ENCODE measurements at regions of chr11 and their contacts with region 1.

Region 1: GRCh38 chr11:63845303-63845702 is 6.4 kb downstream of the MARK2 start:
- DNase-seq: no peak
- H3K4me3 ChIP-seq: no peak overlapping the region
- H3K27ac ChIP-seq: peak overlapping the region in 2 of 4 donors; percentile 22 to 27
- H3K4me1 ChIP-seq: peaks cover 30 to 79% (median 47%) of the 10 kb centered on the region in 4 donors
- H3K27me3 ChIP-seq: no peaks in the 10 kb centered on the region
- CTCF ChIP-seq: no peak
- EP300 ChIP-seq: no peak
- POLR2A ChIP-seq: no peak

Region 2: DNA sequence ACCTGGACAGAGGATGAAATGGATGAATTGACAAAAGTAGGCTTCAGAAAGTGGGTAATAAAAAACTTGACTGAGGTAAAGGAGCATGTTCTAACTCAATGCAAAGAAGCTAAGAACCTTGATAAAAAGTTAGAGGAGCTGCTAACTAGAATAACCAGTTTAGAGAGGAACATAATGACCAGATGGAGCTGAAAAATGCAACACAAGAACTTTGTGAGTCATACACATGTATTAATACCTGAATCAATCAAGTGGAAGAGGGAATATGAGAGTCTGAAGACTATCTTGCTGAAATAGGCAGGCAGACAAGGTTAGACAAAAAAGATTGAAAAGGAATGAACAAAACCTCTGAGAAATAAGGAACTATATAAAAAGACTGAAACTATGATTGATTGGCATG is 523.6 kb before region 1 on chr11:
- in situ Hi-C with region 1: no loop called
- intact Hi-C with region 1: no loop called
- DNase-seq: no peak
- H3K4me3 ChIP-seq: no peak overlapping the region
- H3K27ac ChIP-seq: no peak overlapping the region
- H3K4me1 ChIP-seq: no peaks in the 10 kb centered on the region
- H3K27me3 ChIP-seq: no peaks in the 10 kb centered on the region
- CTCF ChIP-seq: no peak
- EP300 ChIP-seq: no peak
- POLR2A ChIP-seq: no peak

Region 3: GRCh38 chr11:63920939-63921417 is 75.7 kb after region 1 on chr11:
- in situ Hi-C with region 1: no loop called
- intact Hi-C with region 1: loop called (anchors 5 kb)
- DNase-seq: peak; percentile 28
- H3K4me3 ChIP-seq: no peak overlapping the region
- H3K27ac ChIP-seq: peak overlapping the region in 1 of 4 donors; percentile 90
- H3K4me1 ChIP-seq: peaks cover 40 to 46% (median 46%) of the 10 kb centered on the region in 4 donors
- H3K27me3 ChIP-seq: no peaks in the 10 kb centered on the region
- CTCF ChIP-seq: peak in 2 of 5 experiments; percentile 18 to 31
- EP300 ChIP-seq: no peak
- POLR2A ChIP-seq: no peak

Measured in transverse colon (tissue), 4 donors.